MCF 10A (cell line): ENCODE measurements at regions of chr12 and their contacts with region 1.

Region 1: GRCh38 chr12:88580051-88580871 is at the start of gene KITLG:
- DNase-seq: peak; percentile 78
- H3K4me3 Mint-ChIP-seq: peak within 1 kb of the TSS; percentile 90
- H3K27ac Mint-ChIP-seq: peak within 1 kb of the TSS; percentile 76
- H3K4me1 Mint-ChIP-seq: peaks cover 12% of the 10 kb centered on the region
- H3K27me3 Mint-ChIP-seq: no peaks in the 10 kb centered on the region
- CTCF ChIP-seq: no peak
- total RNA-seq, gene KITLG: 3.9 and 4.8 TPM in 2 replicates

Region 2: GRCh38 chr12:88153959-88154358 is 426.3 kb before region 1 on chr12:
- CTCF ChIA-PET with region 1: interaction called, 19 read pairs
- POLR2A ChIA-PET with region 1: no interaction called
- intact Hi-C with region 1: loop called (anchors 1 kb)
- DNase-seq: peak; percentile 46
- H3K4me3 Mint-ChIP-seq: no peak overlapping the region
- H3K27ac Mint-ChIP-seq: no peak overlapping the region
- H3K4me1 Mint-ChIP-seq: peaks cover 8% of the 10 kb centered on the region
- H3K27me3 Mint-ChIP-seq: no peaks in the 10 kb centered on the region
- CTCF ChIP-seq: peak; percentile 50

Region 3: DNA sequence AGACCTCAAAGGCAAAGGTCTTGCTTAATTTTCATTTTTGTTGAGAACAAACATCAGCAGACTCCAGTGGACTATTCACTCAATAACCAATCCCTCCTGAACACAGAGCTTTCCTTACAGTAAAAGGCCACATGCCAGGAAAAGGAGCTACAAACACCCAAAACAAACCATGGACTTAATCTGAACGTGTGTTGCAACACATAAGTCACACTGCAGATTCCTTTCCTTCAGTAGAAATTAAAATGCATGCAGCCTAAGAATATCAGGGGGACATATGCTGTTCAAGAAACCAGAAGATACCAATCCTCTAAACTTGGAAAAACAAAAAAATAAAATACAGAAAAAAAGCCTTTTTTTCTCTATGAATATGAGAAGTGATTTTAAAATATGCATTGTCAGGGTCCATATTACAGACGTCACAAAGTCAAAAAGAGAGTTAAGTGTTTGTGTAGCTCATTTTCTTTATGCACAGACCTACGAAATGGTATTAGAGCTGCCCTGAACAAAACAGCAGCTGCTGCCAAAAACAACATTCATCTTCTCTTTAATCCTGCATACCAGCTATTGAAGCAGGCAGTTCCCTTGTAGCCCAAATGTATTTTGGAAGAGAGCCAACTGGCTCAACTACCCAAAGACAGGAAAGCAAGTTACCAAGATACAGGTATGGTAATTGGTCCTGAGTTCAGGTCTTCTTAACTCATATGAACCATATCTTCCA is 26.2 kb before region 1 on chr12:
- CTCF ChIA-PET with region 1: interaction called, 8 read pairs
- POLR2A ChIA-PET with region 1: interaction called, 10 read pairs
- intact Hi-C with region 1: no loop called
- DNase-seq: peak; percentile 94
- H3K4me3 Mint-ChIP-seq: peak overlapping the region; percentile 34
- H3K27ac Mint-ChIP-seq: peak overlapping the region; percentile 78
- H3K4me1 Mint-ChIP-seq: peaks cover 35% of the 10 kb centered on the region
- H3K27me3 Mint-ChIP-seq: no peaks in the 10 kb centered on the region
- CTCF ChIP-seq: no peak

Region 4: DNA sequence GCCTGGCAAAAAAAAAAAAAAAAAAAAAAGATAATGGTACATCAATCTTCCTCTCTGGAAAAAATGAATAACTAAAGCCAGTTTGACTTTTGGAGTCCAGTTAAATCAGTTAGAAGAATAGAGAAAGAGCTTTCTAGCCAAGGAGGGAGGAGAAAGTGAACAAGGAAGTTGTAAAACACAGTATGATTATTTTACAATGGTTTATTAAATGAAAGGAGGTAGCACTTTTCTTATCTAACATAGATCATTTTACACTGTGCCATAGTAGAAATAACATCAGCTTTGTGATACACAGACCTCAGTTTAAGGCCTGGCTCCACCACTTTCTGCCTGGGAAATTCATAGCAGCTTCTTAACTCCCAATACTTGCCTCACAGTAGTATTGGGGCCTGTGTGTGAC is 15.4 kb after region 1 on chr12:
- CTCF ChIA-PET with region 1: interaction called, 10 read pairs
- POLR2A ChIA-PET with region 1: interaction called, 5 read pairs
- intact Hi-C with region 1: no loop called
- DNase-seq: no peak
- H3K4me3 Mint-ChIP-seq: no peak overlapping the region
- H3K27ac Mint-ChIP-seq: no peak overlapping the region
- H3K4me1 Mint-ChIP-seq: peaks cover 5% of the 10 kb centered on the region
- H3K27me3 Mint-ChIP-seq: no peaks in the 10 kb centered on the region
- CTCF ChIP-seq: no peak

Region 5: GRCh38 chr12:88764781-88765470 is 184.7 kb after region 1 on chr12:
- CTCF ChIA-PET with region 1: no interaction called
- POLR2A ChIA-PET with region 1: no interaction called
- intact Hi-C with region 1: no loop called
- DNase-seq: no peak
- H3K4me3 Mint-ChIP-seq: no peak overlapping the region
- H3K27ac Mint-ChIP-seq: no peak overlapping the region
- H3K4me1 Mint-ChIP-seq: no peaks in the 10 kb centered on the region
- H3K27me3 Mint-ChIP-seq: no peaks in the 10 kb centered on the region
- CTCF ChIP-seq: no peak